PC-3 (cell line): ENCODE measurements at regions of chr19 and their contacts with region 1.

Region 1: DNA sequence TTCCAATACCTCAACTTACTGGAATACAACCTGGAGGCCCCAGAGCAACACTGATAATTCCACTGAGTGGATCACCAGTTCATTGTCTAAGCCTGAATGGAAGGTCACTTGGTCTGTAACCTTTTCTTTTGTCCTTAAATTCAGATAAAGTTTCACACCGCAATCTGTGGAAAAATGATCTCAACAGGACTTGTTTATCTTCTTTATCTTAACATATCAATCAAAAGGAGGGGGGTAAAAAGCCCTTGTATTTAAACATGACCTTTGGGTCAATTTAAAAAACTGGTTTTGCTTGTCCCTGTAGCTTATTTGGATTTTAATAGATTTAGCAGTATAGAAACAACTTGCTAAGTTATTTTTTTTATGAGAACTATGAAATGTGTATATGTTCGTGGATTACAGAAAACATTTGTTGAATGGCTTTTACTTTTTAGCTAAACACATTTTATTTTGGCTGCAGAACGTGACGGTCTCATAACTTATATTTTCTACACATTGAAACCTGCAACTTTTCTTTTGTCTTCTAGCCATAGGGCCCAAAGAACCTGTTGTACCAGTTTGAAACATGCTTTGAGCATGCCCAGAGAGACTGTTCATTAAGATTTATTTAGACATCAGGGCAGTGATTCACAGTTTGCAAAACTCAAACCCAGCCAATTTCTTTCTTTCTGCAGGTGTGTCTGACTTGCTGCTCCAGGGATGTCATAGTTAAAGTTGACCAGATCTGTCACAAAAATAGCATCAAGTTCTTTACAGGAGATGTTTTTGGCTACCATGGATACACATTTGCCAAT is 21.8 kb downstream of the SAE1 start:
- DNase-seq: peak; percentile 86
- ATAC-seq: peak; percentile 63
- H3K4me3 ChIP-seq: peak overlapping the region; percentile 35; the same call in 1 of the 2 replicates
- H3K27ac ChIP-seq: peak overlapping the region; percentile 75
- H3K4me1 ChIP-seq: peaks cover 33% of the 10 kb centered on the region
- H3K27me3 ChIP-seq: no peaks in the 10 kb centered on the region
- CTCF ChIP-seq: no peak

Region 2: GRCh38 chr19:47190167-47190727 is 37.8 kb after region 1 on chr19:
- CTCF ChIA-PET with region 1: no interaction called
- POLR2A ChIA-PET with region 1: no interaction called
- intact Hi-C with region 1: loop called (anchors 5 kb)
- DNase-seq: peak; percentile 49
- ATAC-seq: peak; percentile 80
- H3K4me3 ChIP-seq: no peak overlapping the region
- H3K27ac ChIP-seq: peak overlapping the region; percentile 65
- H3K4me1 ChIP-seq: peaks cover 18% of the 10 kb centered on the region
- H3K27me3 ChIP-seq: no peaks in the 10 kb centered on the region
- CTCF ChIP-seq: no peak